Caco-2 (cell line): ENCODE measurements at regions of chr11 and their contacts with region 1.

Region 1: GRCh38 chr11:102007567-102008437 is 39.4 kb upstream of the CFAP300 start:
- DNase-seq: peak; percentile 73 to 85
- H3K4me3 ChIP-seq: no peak overlapping the region
- H3K4me3 Mint-ChIP-seq: peak overlapping the region; percentile 39
- H3K27ac Mint-ChIP-seq: peak overlapping the region; percentile 68
- H3K4me1 ChIP-seq: peaks cover 49% of the 10 kb centered on the region
- H3K4me1 Mint-ChIP-seq: peaks cover 38% of the 10 kb centered on the region
- H3K27me3 ChIP-seq: no peaks in the 10 kb centered on the region
- H3K27me3 Mint-ChIP-seq: no peaks in the 10 kb centered on the region
- CTCF ChIP-seq: peak; percentile 53 to 91

Region 2: GRCh38 chr11:101759771-101760450 is 247.9 kb before region 1 on chr11:
- CTCF ChIA-PET with region 1: interaction called, 15 read pairs
- POLR2A ChIA-PET with region 1: no interaction called
- intact Hi-C with region 1: loop called (anchors 1 kb)
- DNase-seq: peak in 1 of 2 experiments; percentile 64
- H3K4me3 ChIP-seq: no peak overlapping the region
- H3K4me3 Mint-ChIP-seq: no peak overlapping the region
- H3K27ac Mint-ChIP-seq: no peak overlapping the region
- H3K4me1 ChIP-seq: no peaks in the 10 kb centered on the region
- H3K4me1 Mint-ChIP-seq: no peaks in the 10 kb centered on the region
- H3K27me3 ChIP-seq: no peaks in the 10 kb centered on the region
- H3K27me3 Mint-ChIP-seq: no peaks in the 10 kb centered on the region
- CTCF ChIP-seq: peak; percentile 51 to 76

Region 3: GRCh38 chr11:101880222-101880621 is 127.6 kb before region 1 on chr11:
- CTCF ChIA-PET with region 1: interaction called, 13 read pairs
- POLR2A ChIA-PET with region 1: no interaction called
- intact Hi-C with region 1: loop called (anchors 1 kb)
- DNase-seq: peak; percentile 42 to 77
- H3K4me3 ChIP-seq: no peak overlapping the region
- H3K4me3 Mint-ChIP-seq: no peak overlapping the region
- H3K27ac Mint-ChIP-seq: no peak overlapping the region
- H3K4me1 ChIP-seq: peaks cover 8% of the 10 kb centered on the region
- H3K4me1 Mint-ChIP-seq: peaks cover 11% of the 10 kb centered on the region
- H3K27me3 ChIP-seq: no peaks in the 10 kb centered on the region
- H3K27me3 Mint-ChIP-seq: no peaks in the 10 kb centered on the region
- CTCF ChIP-seq: peak; percentile 66 to 90

Region 4: GRCh38 chr11:101944923-101945322 is 62.9 kb before region 1 on chr11:
- CTCF ChIA-PET with region 1: interaction called, 12 read pairs
- POLR2A ChIA-PET with region 1: no interaction called
- intact Hi-C with region 1: loop called (anchors 1 kb)
- DNase-seq: no peak
- H3K4me3 ChIP-seq: no peak overlapping the region
- H3K4me3 Mint-ChIP-seq: no peak overlapping the region
- H3K27ac Mint-ChIP-seq: no peak overlapping the region
- H3K4me1 ChIP-seq: no peaks in the 10 kb centered on the region
- H3K4me1 Mint-ChIP-seq: peaks cover 7% of the 10 kb centered on the region
- H3K27me3 ChIP-seq: no peaks in the 10 kb centered on the region
- H3K27me3 Mint-ChIP-seq: no peaks in the 10 kb centered on the region
- CTCF ChIP-seq: no peak

Region 5: DNA sequence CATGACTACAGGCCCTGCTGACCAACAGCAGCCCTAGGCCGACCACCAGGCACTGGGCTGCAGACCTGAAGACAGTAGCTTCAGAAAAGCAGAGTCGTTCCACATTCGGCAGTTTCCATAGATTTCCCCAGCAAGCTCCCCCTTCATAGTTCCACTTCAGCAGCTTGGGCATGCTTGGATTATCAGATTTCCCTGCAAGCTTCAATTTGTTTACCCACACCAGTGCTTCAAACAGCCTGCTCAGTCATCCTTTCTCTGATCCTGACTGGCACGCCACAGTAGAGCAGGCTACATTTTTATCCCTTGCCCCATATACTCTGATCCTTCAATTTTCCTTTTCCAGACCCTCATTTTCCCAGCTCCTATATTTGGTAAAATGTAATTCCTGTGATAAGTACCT is 11.7 kb before region 1 on chr11:
- CTCF ChIA-PET with region 1: interaction called, 10 read pairs
- POLR2A ChIA-PET with region 1: no interaction called
- intact Hi-C with region 1: no loop called
- DNase-seq: no peak
- H3K4me3 ChIP-seq: no peak overlapping the region
- H3K4me3 Mint-ChIP-seq: no peak overlapping the region
- H3K27ac Mint-ChIP-seq: peak overlapping the region; percentile 2
- H3K4me1 ChIP-seq: no peaks in the 10 kb centered on the region
- H3K4me1 Mint-ChIP-seq: peaks cover 5% of the 10 kb centered on the region
- H3K27me3 ChIP-seq: no peaks in the 10 kb centered on the region
- H3K27me3 Mint-ChIP-seq: no peaks in the 10 kb centered on the region
- CTCF ChIP-seq: no peak

Region 6: DNA sequence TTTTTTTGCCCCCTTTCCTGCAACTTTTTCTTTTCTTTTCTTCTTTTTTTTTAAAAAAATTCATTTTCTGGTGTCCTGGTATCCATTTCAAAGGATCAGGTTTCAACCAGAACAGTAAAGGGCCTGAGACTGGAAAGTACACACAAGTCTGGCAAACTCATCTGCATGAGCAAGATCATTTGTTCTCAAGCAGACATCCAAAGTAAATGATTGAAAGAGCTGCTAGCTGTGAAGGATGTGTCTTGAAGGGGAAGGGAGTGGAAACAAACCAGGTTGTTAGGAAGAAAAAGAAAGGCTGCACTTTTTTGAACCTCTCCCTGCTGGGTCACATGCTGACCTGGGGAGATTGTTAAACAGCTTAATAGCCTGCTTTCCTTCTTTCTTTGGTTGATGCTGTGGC is 107.8 kb after region 1 on chr11:
- CTCF ChIA-PET with region 1: no interaction called
- POLR2A ChIA-PET with region 1: interaction called, 4 read pairs
- intact Hi-C with region 1: loop called (anchors 1 kb)
- DNase-seq: peak; percentile 78 to 84
- H3K4me3 ChIP-seq: no peak overlapping the region
- H3K4me3 Mint-ChIP-seq: peak overlapping the region; percentile 31
- H3K27ac Mint-ChIP-seq: peak overlapping the region; percentile 31
- H3K4me1 ChIP-seq: peaks cover 69% of the 10 kb centered on the region
- H3K4me1 Mint-ChIP-seq: peaks cover 54% of the 10 kb centered on the region
- H3K27me3 ChIP-seq: no peaks in the 10 kb centered on the region
- H3K27me3 Mint-ChIP-seq: no peaks in the 10 kb centered on the region
- CTCF ChIP-seq: no peak

Region 7: GRCh38 chr11:102510439-102511135 is 502.8 kb after region 1 on chr11:
- CTCF ChIA-PET with region 1: interaction called, 12 read pairs
- POLR2A ChIA-PET with region 1: no interaction called
- intact Hi-C with region 1: no loop called
- DNase-seq: no peak
- H3K4me3 ChIP-seq: no peak overlapping the region
- H3K4me3 Mint-ChIP-seq: no peak overlapping the region
- H3K27ac Mint-ChIP-seq: no peak overlapping the region
- H3K4me1 ChIP-seq: no peaks in the 10 kb centered on the region
- H3K4me1 Mint-ChIP-seq: no peaks in the 10 kb centered on the region
- H3K27me3 ChIP-seq: no peaks in the 10 kb centered on the region
- H3K27me3 Mint-ChIP-seq: no peaks in the 10 kb centered on the region
- CTCF ChIP-seq: no peak